B cell (primary cell): ENCODE measurements at regions of chr7 and their contacts with region 1.

Region 1: DNA sequence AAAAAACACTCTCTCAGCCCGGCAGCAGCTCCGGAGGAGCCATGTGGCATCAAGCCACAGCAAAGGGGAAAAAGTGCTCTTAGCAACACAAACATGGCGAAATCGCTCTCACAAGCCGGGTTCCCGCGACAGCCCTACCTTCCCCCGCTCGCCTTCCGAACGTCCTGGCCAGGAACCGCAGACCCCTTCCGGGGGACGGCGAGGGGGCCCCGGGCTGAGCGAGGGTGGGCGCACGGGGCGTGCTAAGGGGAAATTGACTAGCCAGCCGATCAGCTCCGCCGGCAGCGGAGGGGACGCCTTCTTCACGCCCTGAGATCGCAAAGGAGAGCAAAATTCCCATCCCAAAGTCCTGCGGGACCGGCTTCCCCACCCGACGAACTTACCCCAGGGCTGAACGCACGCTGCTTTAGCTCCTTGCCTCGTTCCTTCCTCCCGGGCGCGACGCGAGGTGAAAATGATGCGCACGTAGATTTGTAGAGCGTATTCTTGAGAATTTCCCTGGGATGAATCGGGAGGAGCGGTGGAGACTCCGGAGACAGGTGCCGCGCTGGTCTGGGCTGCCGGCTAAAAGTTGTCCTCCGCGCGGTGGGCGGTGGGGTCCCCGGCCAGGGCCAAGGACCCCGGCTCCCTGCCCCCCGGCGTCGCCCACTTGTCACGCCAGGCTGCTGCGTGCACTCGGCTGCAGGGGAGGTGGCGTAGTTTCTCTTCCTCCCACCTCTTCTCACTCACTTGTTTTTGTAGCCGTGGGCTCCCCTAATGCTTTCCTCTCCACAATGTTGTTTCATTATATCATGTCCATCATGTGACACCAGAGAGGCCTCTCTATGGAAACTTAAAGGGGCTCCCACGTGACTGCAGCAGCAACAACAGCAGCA is 220.1 kb upstream of the MKLN1 start:
- DNase-seq: peak; percentile 94
- ATAC-seq: peak; percentile 44
- H3K4me3 ChIP-seq: peak overlapping the region; percentile 85 to 100 (median 98)
- H3K4me3 Mint-ChIP-seq: peak overlapping the region; percentile 85
- H3K27ac ChIP-seq: peak overlapping the region; percentile 95 to 98
- H3K27ac Mint-ChIP-seq: peak overlapping the region; percentile 91
- H3K4me1 ChIP-seq: peaks cover 71 to 75% of the 10 kb centered on the region in 2 donors
- H3K4me1 Mint-ChIP-seq: peaks cover 72% of the 10 kb centered on the region
- H3K27me3 ChIP-seq: no peaks in the 10 kb centered on the region
- H3K27me3 Mint-ChIP-seq: no peaks in the 10 kb centered on the region
- CTCF ChIP-seq: no peak

Region 2: GRCh38 chr7:130912862-130913631 is 194.5 kb before region 1 on chr7:
- CTCF ChIA-PET with region 1: interaction called, 3 read pairs
- POLR2A ChIA-PET with region 1: interaction called, 4 read pairs
- intact Hi-C with region 1: loop called (anchors 2 kb)
- DNase-seq: peak; percentile 92
- ATAC-seq: peak; percentile 91
- H3K4me3 ChIP-seq: peak overlapping the region; percentile 54 to 98 (median 73)
- H3K4me3 Mint-ChIP-seq: peak overlapping the region; percentile 90
- H3K27ac ChIP-seq: peak overlapping the region; percentile 82 to 98
- H3K27ac Mint-ChIP-seq: peak overlapping the region; percentile 84
- H3K4me1 ChIP-seq: peaks cover 28 to 37% of the 10 kb centered on the region in 2 donors
- H3K4me1 Mint-ChIP-seq: peaks cover 78% of the 10 kb centered on the region
- H3K27me3 ChIP-seq: no peaks in the 10 kb centered on the region
- H3K27me3 Mint-ChIP-seq: no peaks in the 10 kb centered on the region
- CTCF ChIP-seq: no peak

Region 3: DNA sequence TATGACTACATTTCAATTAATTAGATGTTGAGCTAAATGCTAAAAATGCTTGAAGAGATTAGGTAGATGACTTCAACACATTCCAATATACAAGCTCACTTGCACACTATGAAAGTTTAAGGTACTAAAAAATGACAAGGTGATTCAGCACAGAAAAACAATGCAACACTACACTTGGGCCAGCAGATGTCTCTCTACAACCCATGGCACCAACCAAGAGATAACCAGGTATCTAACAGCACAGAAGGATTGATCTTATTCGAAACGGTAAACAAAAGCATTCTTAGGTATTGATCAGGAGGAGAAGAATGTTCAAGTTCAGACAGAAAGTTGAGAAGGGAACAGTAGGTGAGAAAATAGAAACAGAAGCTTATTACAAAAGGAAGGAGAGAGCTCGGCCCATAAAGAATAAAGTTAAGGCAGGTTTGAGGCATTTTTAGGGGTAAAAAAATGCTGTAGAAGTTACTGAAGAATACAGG is 125.4 kb before region 1 on chr7:
- CTCF ChIA-PET with region 1: interaction called, 11 read pairs
- POLR2A ChIA-PET with region 1: no interaction called
- intact Hi-C with region 1: no loop called
- DNase-seq: peak; percentile 70
- ATAC-seq: peak; percentile 73
- H3K4me3 ChIP-seq: no peak overlapping the region
- H3K4me3 Mint-ChIP-seq: no peak overlapping the region
- H3K27ac ChIP-seq: peak overlapping the region; percentile 9 to 61
- H3K27ac Mint-ChIP-seq: no peak overlapping the region
- H3K4me1 ChIP-seq: peaks cover 13 to 16% of the 10 kb centered on the region in 2 donors
- H3K4me1 Mint-ChIP-seq: peaks cover 25% of the 10 kb centered on the region
- H3K27me3 ChIP-seq: no peaks in the 10 kb centered on the region
- H3K27me3 Mint-ChIP-seq: no peaks in the 10 kb centered on the region
- CTCF ChIP-seq: peak; percentile 87

Region 4: GRCh38 chr7:131077735-131078134 is 29.8 kb before region 1 on chr7:
- CTCF ChIA-PET with region 1: no interaction called
- POLR2A ChIA-PET with region 1: no interaction called
- intact Hi-C with region 1: no loop called
- DNase-seq: no peak
- ATAC-seq: no peak
- H3K4me3 ChIP-seq: no peak overlapping the region
- H3K4me3 Mint-ChIP-seq: no peak overlapping the region
- H3K27ac ChIP-seq: no peak overlapping the region
- H3K27ac Mint-ChIP-seq: no peak overlapping the region
- H3K4me1 ChIP-seq: peaks cover 14 to 17% of the 10 kb centered on the region in 2 donors
- H3K4me1 Mint-ChIP-seq: peaks cover 49% of the 10 kb centered on the region
- H3K27me3 ChIP-seq: no peaks in the 10 kb centered on the region
- H3K27me3 Mint-ChIP-seq: no peaks in the 10 kb centered on the region
- CTCF ChIP-seq: no peak

Region 5: DNA sequence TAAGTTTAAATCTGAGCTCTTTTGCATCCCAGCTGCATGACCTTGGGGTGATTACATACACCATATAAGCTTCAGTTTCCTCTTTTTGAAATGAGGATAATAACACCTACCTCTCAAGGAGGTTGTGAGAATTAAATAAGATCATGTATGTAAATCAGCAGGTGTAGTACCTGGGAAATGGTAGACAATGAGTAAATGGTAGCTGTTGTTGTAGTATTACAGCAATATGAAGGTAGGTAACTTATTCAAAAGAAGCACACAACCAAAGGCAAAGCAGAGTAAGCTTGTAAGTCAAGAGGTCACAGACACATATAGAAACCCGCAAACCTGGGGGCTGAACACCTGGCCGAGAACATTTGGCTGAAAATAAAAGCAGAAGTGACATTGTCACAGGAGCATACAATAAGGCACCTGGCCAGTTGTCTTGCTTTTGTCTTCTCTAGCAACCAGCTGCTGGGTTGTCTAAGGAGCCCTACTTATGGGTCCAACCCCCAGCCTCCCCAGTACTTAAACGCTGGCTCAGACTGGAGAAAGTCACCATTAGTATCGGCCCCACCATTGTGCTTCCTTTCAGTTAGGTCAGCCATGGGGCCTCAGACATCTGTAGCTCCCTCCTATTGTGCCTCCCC is 16.5 kb after region 1 on chr7:
- CTCF ChIA-PET with region 1: interaction called, 20 read pairs
- POLR2A ChIA-PET with region 1: interaction called, 104 read pairs
- intact Hi-C with region 1: loop called (anchors 1 kb)
- DNase-seq: peak; percentile 92
- ATAC-seq: peak; percentile 84
- H3K4me3 ChIP-seq: peak overlapping the region in 2 of 5 experiments; percentile 11
- H3K4me3 Mint-ChIP-seq: peak overlapping the region; percentile 66
- H3K27ac ChIP-seq: peak overlapping the region; percentile 74 to 77
- H3K27ac Mint-ChIP-seq: peak overlapping the region; percentile 90
- H3K4me1 ChIP-seq: peaks cover 37 to 38% of the 10 kb centered on the region in 2 donors
- H3K4me1 Mint-ChIP-seq: peaks cover 39% of the 10 kb centered on the region
- H3K27me3 ChIP-seq: no peaks in the 10 kb centered on the region
- H3K27me3 Mint-ChIP-seq: no peaks in the 10 kb centered on the region
- CTCF ChIP-seq: no peak

Region 6: GRCh38 chr7:131231381-131232220 is 124.0 kb after region 1 on chr7:
- CTCF ChIA-PET with region 1: interaction called, 10 read pairs
- POLR2A ChIA-PET with region 1: interaction called, 3 read pairs
- intact Hi-C with region 1: loop called (anchors 1 kb)
- DNase-seq: peak; percentile 75
- ATAC-seq: peak; percentile 76
- H3K4me3 ChIP-seq: peak overlapping the region; percentile 36 to 66 (median 44)
- H3K4me3 Mint-ChIP-seq: peak overlapping the region; percentile 86
- H3K27ac ChIP-seq: peak overlapping the region; percentile 66 to 77
- H3K27ac Mint-ChIP-seq: peak overlapping the region; percentile 90
- H3K4me1 ChIP-seq: peaks cover 6 to 11% of the 10 kb centered on the region in 2 donors
- H3K4me1 Mint-ChIP-seq: peaks cover 24% of the 10 kb centered on the region
- H3K27me3 ChIP-seq: no peaks in the 10 kb centered on the region
- H3K27me3 Mint-ChIP-seq: no peaks in the 10 kb centered on the region
- CTCF ChIP-seq: no peak

Region 7: GRCh38 chr7:131327626-131328376 is 220.2 kb after region 1 on chr7 and contains the start of gene MKLN1:
- CTCF ChIA-PET with region 1: interaction called, 6 read pairs
- POLR2A ChIA-PET with region 1: interaction called, 4 read pairs
- intact Hi-C with region 1: loop called (anchors 1 kb)
- DNase-seq: peak; percentile 93
- ATAC-seq: peak; percentile 97
- H3K4me3 ChIP-seq: peak within 1 kb of the TSS; percentile 93 to 99 (median 96)
- H3K4me3 Mint-ChIP-seq: peak within 1 kb of the TSS; percentile 85
- H3K27ac ChIP-seq: peak within 1 kb of the TSS; percentile 88 to 91
- H3K27ac Mint-ChIP-seq: peak within 1 kb of the TSS; percentile 95
- H3K4me1 ChIP-seq: peaks cover 26 to 29% of the 10 kb centered on the region in 2 donors
- H3K4me1 Mint-ChIP-seq: peaks cover 62% of the 10 kb centered on the region
- H3K27me3 ChIP-seq: no peaks in the 10 kb centered on the region
- H3K27me3 Mint-ChIP-seq: no peaks in the 10 kb centered on the region
- CTCF ChIP-seq: no peak
- total RNA-seq, gene MKLN1: 68.4 and 73.6 TPM in 2 replicates